Lower leg skin (tissue), 4 donors: ENCODE measurements at regions of chr5 and their contacts with region 1.

Region 1: DNA sequence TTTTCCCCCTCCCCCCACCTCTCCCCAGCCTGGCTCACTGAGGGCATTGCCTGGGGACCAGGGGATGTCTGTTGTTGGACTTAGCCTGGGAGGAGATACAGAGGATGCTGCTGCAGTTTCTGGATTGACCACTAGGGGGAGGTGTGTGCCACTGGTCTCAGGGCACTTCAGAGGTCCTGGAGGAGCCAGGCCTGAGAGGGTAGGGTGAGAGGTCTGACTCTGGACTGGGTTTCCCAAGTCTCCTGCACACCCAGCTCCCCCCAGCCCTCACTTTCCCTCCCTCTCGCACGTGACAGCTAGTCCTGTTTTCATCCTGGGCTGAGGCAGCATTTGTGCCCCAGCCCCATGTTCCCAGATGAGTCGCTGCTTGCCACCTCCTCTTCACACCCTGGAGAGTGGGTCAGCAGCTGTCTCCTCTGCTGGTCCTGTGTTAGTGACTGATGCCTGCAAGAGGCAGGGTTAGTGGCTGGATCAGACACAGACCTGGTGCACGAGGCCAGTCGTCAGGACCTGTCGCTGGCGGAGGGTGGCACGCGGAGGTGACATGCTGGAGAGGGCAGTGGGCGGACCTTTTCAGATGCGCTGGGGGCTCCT is 4.4 kb downstream of the IL3 start:
- DNase-seq: peak; percentile 56 to 93
- H3K4me3 ChIP-seq: no peak overlapping the region
- CTCF ChIP-seq: peak in 1 of 3 donors; percentile 47
- POLR2A ChIP-seq: no peak

Region 2: DNA sequence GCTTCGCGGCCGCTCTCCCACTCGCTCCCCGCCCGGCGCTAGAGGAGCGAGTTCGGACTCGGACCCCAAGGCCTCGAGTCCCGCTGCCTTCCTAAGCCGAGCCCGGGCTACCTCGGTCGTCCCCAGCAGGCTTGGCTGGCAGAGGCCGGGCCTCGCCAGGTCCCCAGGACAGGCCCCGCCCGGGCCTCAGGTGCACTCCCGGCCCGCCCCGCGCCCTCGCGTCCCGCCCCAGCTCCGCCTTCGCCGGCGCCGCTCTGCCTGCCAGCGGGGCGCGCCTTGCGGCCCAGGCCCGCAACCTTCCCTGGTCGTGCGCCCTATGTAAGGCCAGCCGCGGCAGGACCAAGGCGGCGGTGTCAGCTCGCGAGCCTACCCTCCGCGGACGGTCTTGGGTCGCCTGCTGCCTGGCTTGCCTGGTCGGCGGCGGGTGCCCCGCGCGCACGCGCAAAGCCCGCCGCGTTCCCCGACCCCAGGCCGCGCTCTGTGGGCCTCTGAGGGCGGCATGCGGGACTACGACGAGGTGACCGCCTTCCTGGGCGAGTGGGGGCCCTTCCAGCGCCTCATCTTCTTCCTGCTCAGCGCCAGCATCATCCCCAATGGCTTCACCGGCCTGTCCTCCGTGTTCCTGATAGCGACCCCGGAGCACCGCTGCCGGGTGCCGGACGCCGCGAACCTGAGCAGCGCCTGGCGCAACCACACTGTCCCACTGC is 304.8 kb after region 1 on chr5 and contains the start of gene SLC22A5:
- intact Hi-C with region 1: loop called (anchors 10 kb)
- DNase-seq: peak in 1 of 2 donors; percentile 94
- H3K4me3 ChIP-seq: peak within 1 kb of the TSS; percentile 55
- CTCF ChIP-seq: no peak
- POLR2A ChIP-seq: no peak
- total RNA-seq, gene SLC22A5: 13.2 to 25.4 (median 15.7) TPM